CD8-positive, alpha-beta T cell (primary cell): ENCODE measurements at regions of chr17 and their contacts with region 1.

Region 1: GRCh38 chr17:29777663-29778062 is 152.4 kb downstream of the SSH2 start:
- DNase-seq: no peak
- ATAC-seq: no peak
- H3K4me3 ChIP-seq: no peak overlapping the region
- H3K4me3 Mint-ChIP-seq: no peak overlapping the region
- H3K27ac ChIP-seq: no peak overlapping the region
- H3K27ac Mint-ChIP-seq: no peak overlapping the region
- H3K4me1 ChIP-seq: peaks cover 7% of the 10 kb centered on the region
- H3K4me1 Mint-ChIP-seq: peaks cover 7% of the 10 kb centered on the region
- H3K27me3 ChIP-seq: no peaks in the 10 kb centered on the region
- H3K27me3 Mint-ChIP-seq: no peaks in the 10 kb centered on the region
- CTCF ChIP-seq: no peak

Region 2: DNA sequence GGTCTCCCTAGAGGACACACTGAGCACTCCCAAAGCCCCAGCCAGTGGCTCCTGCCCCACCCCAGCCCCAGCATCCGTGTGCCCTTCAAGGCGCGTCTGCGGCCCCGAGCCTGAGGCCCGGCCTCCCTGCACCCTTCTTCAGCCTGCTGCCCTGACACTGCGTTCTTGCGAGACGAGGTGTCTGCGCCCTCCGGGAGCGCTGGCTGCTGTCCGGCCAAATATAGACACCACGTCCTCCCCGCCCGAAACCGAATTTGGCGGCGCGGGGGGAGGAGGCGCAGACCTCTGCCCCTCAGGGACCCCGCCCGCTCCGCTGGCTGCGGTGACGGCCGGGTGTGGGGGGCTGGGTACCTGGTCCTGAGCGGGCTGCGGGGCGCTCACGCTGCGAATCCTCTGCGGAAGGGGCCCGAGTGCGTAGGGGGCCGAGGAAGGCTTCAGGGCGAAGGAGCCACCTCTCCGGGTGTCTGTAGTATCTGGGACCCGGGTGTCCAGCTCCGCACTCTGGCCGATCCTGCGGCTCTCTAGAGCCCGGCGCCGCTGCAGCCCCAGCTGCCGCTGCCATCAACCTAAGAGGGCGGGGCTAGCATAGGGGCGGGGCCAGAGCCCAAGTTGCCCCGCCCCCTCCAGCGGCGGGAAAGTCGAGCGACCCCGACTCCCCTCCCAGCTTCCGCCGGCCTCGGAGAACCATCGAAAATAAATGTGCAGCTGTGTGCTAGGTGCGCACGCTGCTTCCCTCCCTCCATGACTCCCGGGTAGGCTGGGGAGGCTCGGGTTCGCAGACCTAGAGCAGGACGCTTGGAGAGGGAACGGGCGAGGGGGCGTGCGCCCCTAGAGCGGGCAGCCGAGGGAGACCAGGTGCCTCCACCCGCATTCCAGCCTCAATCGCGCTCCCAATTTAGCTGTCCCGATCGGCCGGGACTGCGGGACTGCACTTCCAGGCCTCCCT is 155.1 kb before region 1 on chr17 and contains the start of gene CORO6:
- CTCF ChIA-PET with region 1: interaction called, 29 read pairs
- POLR2A ChIA-PET with region 1: interaction called, 11 read pairs
- intact Hi-C with region 1: loop called in 1 of 2 experiments (anchors 1 kb)
- DNase-seq: peak; percentile 41 to 79 (median 69)
- ATAC-seq: peak; percentile 75
- H3K4me3 ChIP-seq: peak within 1 kb of the TSS; percentile 58 to 72
- H3K4me3 Mint-ChIP-seq: peak within 1 kb of the TSS; percentile 83
- H3K27ac ChIP-seq: no peak within 1 kb of the TSS
- H3K27ac Mint-ChIP-seq: peak within 1 kb of the TSS; percentile 45
- H3K4me1 ChIP-seq: peaks cover 28% of the 10 kb centered on the region
- H3K4me1 Mint-ChIP-seq: peaks cover 28% of the 10 kb centered on the region
- H3K27me3 ChIP-seq: no peaks in the 10 kb centered on the region
- H3K27me3 Mint-ChIP-seq: no peaks in the 10 kb centered on the region
- CTCF ChIP-seq: no peak
- total RNA-seq, gene CORO6: 1.2 to 1.7 TPM

Region 3: GRCh38 chr17:29653995-29654714 is 123.5 kb before region 1 on chr17:
- CTCF ChIA-PET with region 1: interaction called, 12 read pairs
- POLR2A ChIA-PET with region 1: no interaction called
- intact Hi-C with region 1: no loop called
- DNase-seq: no peak
- ATAC-seq: no peak
- H3K4me3 ChIP-seq: no peak overlapping the region
- H3K4me3 Mint-ChIP-seq: no peak overlapping the region
- H3K27ac ChIP-seq: no peak overlapping the region
- H3K27ac Mint-ChIP-seq: no peak overlapping the region
- H3K4me1 ChIP-seq: no peaks in the 10 kb centered on the region
- H3K4me1 Mint-ChIP-seq: peaks cover 6% of the 10 kb centered on the region
- H3K27me3 ChIP-seq: no peaks in the 10 kb centered on the region
- H3K27me3 Mint-ChIP-seq: no peaks in the 10 kb centered on the region
- CTCF ChIP-seq: no peak

Region 4: DNA sequence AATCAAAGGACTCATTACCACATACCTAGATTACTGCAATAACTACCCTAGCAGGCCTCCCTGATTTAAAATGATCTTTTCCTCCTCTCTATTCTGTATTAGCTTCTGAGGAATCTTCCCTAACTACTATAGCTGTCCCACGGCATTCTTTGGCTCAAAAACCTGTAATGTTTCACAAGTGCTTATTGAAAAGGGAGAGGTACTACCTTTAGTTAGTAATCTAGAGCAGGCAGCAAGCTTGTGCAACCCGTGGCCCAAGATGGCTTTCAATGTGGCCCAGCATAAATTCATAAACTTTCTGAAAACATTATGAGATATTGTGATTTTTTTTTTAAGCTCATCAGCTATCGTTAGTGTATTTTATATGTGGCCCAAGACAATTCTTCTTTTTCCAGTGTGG is 83.9 kb before region 1 on chr17:
- CTCF ChIA-PET with region 1: interaction called, 19 read pairs
- POLR2A ChIA-PET with region 1: interaction called, 3 read pairs
- intact Hi-C with region 1: loop called in 1 of 2 experiments (anchors 5 kb)
- DNase-seq: no peak
- ATAC-seq: no peak
- H3K4me3 ChIP-seq: no peak overlapping the region
- H3K4me3 Mint-ChIP-seq: no peak overlapping the region
- H3K27ac ChIP-seq: no peak overlapping the region
- H3K27ac Mint-ChIP-seq: peak overlapping the region; percentile 2
- H3K4me1 ChIP-seq: no peaks in the 10 kb centered on the region
- H3K4me1 Mint-ChIP-seq: peaks cover 20% of the 10 kb centered on the region
- H3K27me3 ChIP-seq: no peaks in the 10 kb centered on the region
- H3K27me3 Mint-ChIP-seq: no peaks in the 10 kb centered on the region
- CTCF ChIP-seq: no peak

Region 5: GRCh38 chr17:29705386-29705785 is 72.3 kb before region 1 on chr17:
- CTCF ChIA-PET with region 1: interaction called, 19 read pairs
- POLR2A ChIA-PET with region 1: interaction called, 4 read pairs
- intact Hi-C with region 1: no loop called
- DNase-seq: peak in 2 of 9 experiments; percentile 29 to 58
- ATAC-seq: peak; percentile 16
- H3K4me3 ChIP-seq: peak overlapping the region; percentile 1 to 9
- H3K4me3 Mint-ChIP-seq: peak overlapping the region; percentile 66
- H3K27ac ChIP-seq: peak overlapping the region; percentile 62 to 91
- H3K27ac Mint-ChIP-seq: peak overlapping the region; percentile 99
- H3K4me1 ChIP-seq: peaks cover 37% of the 10 kb centered on the region
- H3K4me1 Mint-ChIP-seq: peaks cover 58% of the 10 kb centered on the region
- H3K27me3 ChIP-seq: no peaks in the 10 kb centered on the region
- H3K27me3 Mint-ChIP-seq: no peaks in the 10 kb centered on the region
- CTCF ChIP-seq: no peak

Region 6: DNA sequence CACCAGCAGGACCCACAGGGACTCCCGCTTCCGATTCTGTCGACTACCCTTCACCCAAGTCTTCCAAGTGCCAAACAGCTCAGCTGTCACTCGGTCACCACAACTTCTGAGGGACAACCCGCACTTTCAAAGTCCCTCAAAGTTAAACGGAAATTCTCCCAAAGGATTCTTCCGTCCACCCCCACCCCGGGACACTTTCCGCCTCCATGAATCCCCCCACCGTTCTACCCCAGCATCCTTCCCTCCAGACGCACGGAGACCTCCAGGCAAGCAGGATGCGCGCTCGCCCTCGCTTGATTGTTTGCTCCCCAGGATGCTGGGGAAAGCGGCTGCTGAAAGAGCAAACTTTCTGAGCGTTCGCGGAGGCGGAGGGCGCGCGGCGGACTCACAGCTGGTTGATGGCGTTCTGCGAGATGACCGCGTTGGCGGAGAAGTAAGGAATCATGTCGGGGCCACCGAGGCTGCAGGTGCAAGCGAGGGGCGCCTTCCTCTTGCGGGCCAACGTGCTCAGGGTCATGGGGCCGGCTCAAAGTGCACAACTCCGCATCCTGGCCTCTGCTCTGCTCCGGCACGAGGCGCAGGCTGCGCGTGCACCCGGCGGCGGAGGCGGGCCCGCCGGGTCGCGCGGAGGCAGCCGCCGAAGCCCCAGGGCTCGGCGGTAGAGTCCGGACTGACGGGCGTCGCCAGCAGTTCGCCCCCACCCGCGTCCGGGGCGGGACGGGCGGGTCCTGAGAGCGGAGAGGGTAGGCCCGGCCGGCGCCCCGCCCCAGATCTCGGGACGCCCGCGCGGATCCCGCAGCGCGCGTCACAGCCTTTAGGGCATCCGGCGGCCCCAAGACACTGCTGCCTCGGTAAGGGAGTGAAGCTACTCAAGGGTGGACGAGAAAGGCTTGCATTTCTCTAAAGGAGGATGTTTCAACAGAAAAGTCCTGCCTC is 16.6 kb before region 1 on chr17:
- CTCF ChIA-PET with region 1: interaction called, 9 read pairs
- POLR2A ChIA-PET with region 1: no interaction called
- intact Hi-C with region 1: loop called in 1 of 2 experiments (anchors 1 kb)
- DNase-seq: peak; percentile 80 to 95 (median 92)
- ATAC-seq: peak; percentile 84
- H3K4me3 ChIP-seq: peak overlapping the region; percentile 84 to 88
- H3K4me3 Mint-ChIP-seq: peak overlapping the region; percentile 96
- H3K27ac ChIP-seq: peak overlapping the region; percentile 75 to 81
- H3K27ac Mint-ChIP-seq: peak overlapping the region; percentile 93
- H3K4me1 ChIP-seq: peaks cover 42% of the 10 kb centered on the region
- H3K4me1 Mint-ChIP-seq: peaks cover 41% of the 10 kb centered on the region
- H3K27me3 ChIP-seq: no peaks in the 10 kb centered on the region
- H3K27me3 Mint-ChIP-seq: no peaks in the 10 kb centered on the region
- CTCF ChIP-seq: no peak